Activated T-helper 2 cell treated with anti-CD3 and anti-CD28 coated beads, Interferon-gamma antibody, Interleukin-2, Interleukin-4, amounts not matched to agents 10 μg/mL and 5 μg/mL and 100 μg/mL, durations not matched to agents 14 hours and 24 hours and 36 hours (primary cell): ENCODE measurements at regions of chr17 and their contacts with region 1.

Region 1: GRCh38 chr17:80361495-80362220 is 53.3 kb upstream of the ENDOV start:
- DNase-seq: no peak
- H3K4me3 Mint-ChIP-seq: no peak overlapping the region
- H3K27ac Mint-ChIP-seq: no peak overlapping the region
- H3K4me1 Mint-ChIP-seq: no peaks in the 10 kb centered on the region
- H3K27me3 Mint-ChIP-seq: no peaks in the 10 kb centered on the region

Region 2: GRCh38 chr17:80337195-80337895 is 24.3 kb before region 1 on chr17:
- intact Hi-C with region 1: loop called (anchors 2 kb)
- DNase-seq: no peak
- H3K4me3 Mint-ChIP-seq: no peak overlapping the region
- H3K27ac Mint-ChIP-seq: no peak overlapping the region
- H3K4me1 Mint-ChIP-seq: no peaks in the 10 kb centered on the region
- H3K27me3 Mint-ChIP-seq: no peaks in the 10 kb centered on the region